Right lobe of liver (tissue), 6 donors: ENCODE measurements at regions of chr15 and their contacts with region 1.

Region 1: GRCh38 chr15:101251830-101252820 is at the start of gene CHSY1:
- DNase-seq: peak; percentile 93 to 94 (median 94)
- ATAC-seq: peak; percentile 81 to 90 (median 88)
- H3K4me3 ChIP-seq: peak within 1 kb of the TSS; percentile 78 to 91 (median 80)
- H3K27ac ChIP-seq: peak within 1 kb of the TSS; percentile 64 to 78 (median 75)
- H3K4me1 ChIP-seq: peaks cover 0 to 21% (median 0%) of the 10 kb centered on the region in 4 donors
- H3K27me3 ChIP-seq: no peaks in the 10 kb centered on the region
- CTCF ChIP-seq: peak in 2 of 4 donors; percentile 7 to 16
- POLR2A ChIP-seq: peak; percentile 81
- total RNA-seq, gene CHSY1: 4.9 to 12.6 (median 7.2) TPM

Region 2: GRCh38 chr15:101088788-101089583 is 163.1 kb before region 1 on chr15:
- intact Hi-C with region 1: loop called in 1 of 2 experiments (anchors 5 kb)
- DNase-seq: peak; percentile 74 to 77 (median 76)
- ATAC-seq: peak; percentile 88 to 95 (median 88)
- H3K4me3 ChIP-seq: no peak overlapping the region
- H3K27ac ChIP-seq: no peak overlapping the region
- H3K4me1 ChIP-seq: no peaks in the 10 kb centered on the region
- H3K27me3 ChIP-seq: no peaks in the 10 kb centered on the region
- CTCF ChIP-seq: peak; percentile 94 to 99 (median 98)
- POLR2A ChIP-seq: no peak